Transverse colon (tissue), 4 donors: ENCODE measurements at regions of chr17 and their contacts with region 1.

Region 1: GRCh38 chr17:44775136-44775837 is 16.5 kb downstream of the ADAM11 start:
- DNase-seq: peak; percentile 99
- H3K4me3 ChIP-seq: peak overlapping the region; percentile 34 to 61 (median 45)
- H3K27ac ChIP-seq: peak overlapping the region; percentile 38 to 85 (median 70)
- H3K4me1 ChIP-seq: peaks cover 12 to 26% (median 19%) of the 10 kb centered on the region in 4 donors
- H3K27me3 ChIP-seq: peaks cover 17% of the 10 kb centered on the region
- CTCF ChIP-seq: peak in 2 of 5 experiments; percentile 7 to 16
- EP300 ChIP-seq: no peak
- POLR2A ChIP-seq: no peak

Region 2: GRCh38 chr17:44804302-44805089 is 29.2 kb after region 1 on chr17:
- in situ Hi-C with region 1: no loop called
- intact Hi-C with region 1: no loop called
- DNase-seq: peak; percentile 45
- H3K4me3 ChIP-seq: no peak overlapping the region
- H3K27ac ChIP-seq: peak overlapping the region; percentile 67 to 85 (median 78)
- H3K4me1 ChIP-seq: peaks cover 0 to 27% (median 2%) of the 10 kb centered on the region in 4 donors
- H3K27me3 ChIP-seq: peaks cover 6% of the 10 kb centered on the region
- CTCF ChIP-seq: no peak
- EP300 ChIP-seq: peak; percentile 72
- POLR2A ChIP-seq: no peak

Region 3: GRCh38 chr17:44864866-44865660 is 89.8 kb after region 1 on chr17:
- in situ Hi-C with region 1: loop called (anchors 5 to 10 kb)
- intact Hi-C with region 1: loop called (anchors 5 kb)
- DNase-seq: peak; percentile 69
- H3K4me3 ChIP-seq: no peak overlapping the region
- H3K27ac ChIP-seq: peak overlapping the region; percentile 8 to 81 (median 72)
- H3K4me1 ChIP-seq: peaks cover 0 to 5% (median 4%) of the 10 kb centered on the region in 4 donors
- H3K27me3 ChIP-seq: no peaks in the 10 kb centered on the region
- CTCF ChIP-seq: peak; percentile 84 to 92 (median 89)
- EP300 ChIP-seq: peak; percentile 16
- POLR2A ChIP-seq: no peak

Region 4: GRCh38 chr17:44884941-44885340 is 109.7 kb after region 1 on chr17:
- in situ Hi-C with region 1: no loop called
- intact Hi-C with region 1: loop called (anchors 5 kb)
- DNase-seq: no peak
- H3K4me3 ChIP-seq: no peak overlapping the region
- H3K27ac ChIP-seq: no peak overlapping the region
- H3K4me1 ChIP-seq: no peaks in the 10 kb centered on the region
- H3K27me3 ChIP-seq: no peaks in the 10 kb centered on the region
- CTCF ChIP-seq: no peak
- EP300 ChIP-seq: no peak
- POLR2A ChIP-seq: no peak

Region 5: GRCh38 chr17:45021607-45022287 is 246.5 kb after region 1 on chr17:
- in situ Hi-C with region 1: no loop called
- intact Hi-C with region 1: loop called (anchors 5 kb)
- DNase-seq: peak; percentile 72
- H3K4me3 ChIP-seq: peak overlapping the region in 3 of 4 donors; percentile 33 to 51 (median 35)
- H3K27ac ChIP-seq: peak overlapping the region; percentile 76 to 85 (median 83)
- H3K4me1 ChIP-seq: peaks cover 30 to 44% (median 30%) of the 10 kb centered on the region in 4 donors
- H3K27me3 ChIP-seq: peaks cover 8% of the 10 kb centered on the region
- CTCF ChIP-seq: peak in 4 of 5 experiments; percentile 65 to 90 (median 87)
- EP300 ChIP-seq: no peak
- POLR2A ChIP-seq: peak; percentile 33

Region 6: DNA sequence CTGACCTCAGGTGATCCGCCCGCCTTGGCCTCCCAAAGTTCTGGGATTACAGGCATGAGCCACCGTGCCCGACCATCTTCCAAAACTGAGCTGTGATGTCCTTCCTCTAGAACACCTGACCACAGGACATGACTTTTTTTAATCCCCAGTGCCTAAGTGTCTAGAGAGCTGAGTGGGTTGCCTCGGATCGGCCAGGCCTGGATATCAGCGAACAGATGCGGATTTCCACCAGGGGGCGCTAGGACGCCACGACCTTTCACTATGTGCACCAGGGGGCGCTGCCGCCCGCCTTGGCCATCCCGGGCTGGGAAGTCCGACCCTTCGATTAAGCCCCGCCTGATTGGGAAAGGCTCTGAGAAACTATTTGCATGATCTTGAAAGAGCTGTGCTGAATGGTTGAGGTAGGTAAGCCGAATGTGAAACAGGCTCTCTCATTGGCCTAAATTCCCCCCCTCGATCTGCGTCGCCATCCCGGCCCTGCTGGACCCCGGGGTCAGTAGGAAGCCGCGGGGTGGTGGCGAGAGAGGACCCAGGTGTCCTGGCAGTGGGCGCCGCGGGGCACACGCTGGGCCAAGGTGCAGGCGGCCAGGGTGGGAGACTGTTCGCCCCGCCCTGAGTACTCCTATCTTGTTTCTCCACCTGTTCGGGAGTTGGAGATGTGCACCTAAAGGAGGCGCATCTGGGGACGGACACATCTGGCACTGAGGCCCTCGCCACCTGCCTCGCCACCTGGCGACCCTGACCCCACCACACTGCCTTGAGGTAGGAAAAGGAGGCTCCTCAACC is 360.1 kb after region 1 on chr17 and contains the start of gene ACBD4:
- in situ Hi-C with region 1: no loop called
- intact Hi-C with region 1: loop called (anchors 10 kb)
- DNase-seq: peak; percentile 96
- H3K4me3 ChIP-seq: peak within 1 kb of the TSS; percentile 61 to 73 (median 68)
- H3K27ac ChIP-seq: peak within 1 kb of the TSS; percentile 80 to 92 (median 90)
- H3K4me1 ChIP-seq: peaks cover 17 to 50% (median 39%) of the 10 kb centered on the region in 4 donors
- H3K27me3 ChIP-seq: no peaks in the 10 kb centered on the region
- CTCF ChIP-seq: peak; percentile 100
- EP300 ChIP-seq: no peak
- POLR2A ChIP-seq: peak; percentile 80
- total RNA-seq, gene ACBD4: 24.9 to 96.1 (median 38.6) TPM